ENCODE measurements at regions of chr5 and their contacts with region 1.

Region 1: GRCh38 chr5:141557681-141558136 is 61.1 kb downstream of the DIAPH1 start:
- DNase-seq: peak; percentile 50
- ATAC-seq: peak; percentile 78
- H3K4me3 ChIP-seq: no peak overlapping the region
- H3K27ac ChIP-seq: no peak overlapping the region
- H3K4me1 ChIP-seq: no peaks in the 10 kb centered on the region
- H3K27me3 ChIP-seq: no peaks in the 10 kb centered on the region
- CTCF ChIP-seq: peak; percentile 83
- EP300 ChIP-seq: no peak
- POLR2A ChIP-seq: no peak
- RAD21 ChIP-seq: peak; percentile 73

Region 2: GRCh38 chr5:141223112-141223783 is 334.5 kb before region 1 on chr5 and contains the start of gene PCDHB14:
- CTCF ChIA-PET with region 1: interaction called, 13 read pairs
- POLR2A ChIA-PET with region 1: no interaction called
- in situ Hi-C with region 1: loop called (anchors 5 kb)
- intact Hi-C with region 1: no loop called
- DNase-seq: peak; percentile 45
- ATAC-seq: peak; percentile 92
- H3K4me3 ChIP-seq: peak within 1 kb of the TSS; percentile 41 to 57 (median 52)
- H3K27ac ChIP-seq: no peak within 1 kb of the TSS
- H3K4me1 ChIP-seq: 0 out of 2 replicates have a peak, but pooled peaks cover 7% of the 10 kb centered on the region
- H3K27me3 ChIP-seq: peaks cover 3 to 4% of the 10 kb centered on the region in 2 experiments; a peak in 3 of 5 replicates
- CTCF ChIP-seq: peak; percentile 65
- EP300 ChIP-seq: no peak
- POLR2A ChIP-seq: no peak
- RAD21 ChIP-seq: no peak
- total RNA-seq, gene PCDHB14: 0.32 and 0.40 TPM in 2 replicates

Region 3: DNA sequence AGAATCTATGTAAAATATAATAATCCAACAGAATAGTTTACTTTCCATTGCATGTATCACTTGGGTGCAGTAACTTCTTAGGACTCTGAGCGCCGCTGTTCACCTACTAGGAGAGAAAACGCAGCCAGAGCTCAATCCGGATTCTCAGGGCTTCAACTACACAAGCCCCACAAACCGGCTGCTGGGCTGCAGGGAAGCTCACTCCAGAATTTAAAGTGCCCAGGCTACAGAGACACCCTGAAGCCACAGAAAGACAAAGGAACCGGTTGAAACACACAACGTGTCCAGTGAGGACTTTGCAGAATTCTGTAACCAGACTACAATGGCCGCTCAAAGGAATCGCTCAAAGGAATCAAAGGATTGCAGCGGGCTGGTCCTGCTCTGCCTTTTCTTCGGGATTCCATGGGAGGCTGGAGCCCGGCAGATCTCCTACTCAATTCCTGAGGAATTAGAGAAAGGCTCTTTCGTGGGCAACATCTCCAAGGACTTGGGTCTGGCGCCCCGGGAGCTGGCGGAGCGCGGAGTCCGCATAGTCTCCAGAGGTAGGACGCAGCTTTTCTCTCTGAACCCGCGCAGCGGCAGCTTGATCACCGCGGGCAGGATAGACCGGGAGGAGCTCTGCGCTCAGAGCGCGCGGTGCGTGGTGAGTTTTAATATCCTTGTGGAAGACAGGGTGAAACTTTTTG is 144.7 kb before region 1 on chr5 and contains the start of gene PCDHGA10:
- CTCF ChIA-PET with region 1: interaction called, 9 read pairs
- POLR2A ChIA-PET with region 1: no interaction called
- in situ Hi-C with region 1: loop called (anchors 5 kb)
- intact Hi-C with region 1: loop called (anchors 1 kb)
- DNase-seq: peak; percentile 15
- ATAC-seq: peak; percentile 75
- H3K4me3 ChIP-seq: no peak within 1 kb of the TSS
- H3K27ac ChIP-seq: no peak within 1 kb of the TSS
- H3K4me1 ChIP-seq: no peaks in the 10 kb centered on the region
- H3K27me3 ChIP-seq: no peaks in the 10 kb centered on the region
- CTCF ChIP-seq: peak; percentile 59
- EP300 ChIP-seq: no peak
- POLR2A ChIP-seq: no peak
- RAD21 ChIP-seq: no peak
- total RNA-seq, gene PCDHGA10: 0.06 and 0.18 TPM in 2 replicates